Heart left ventricle (tissue), 16 donors: ENCODE measurements at regions of chr11 and their contacts with region 1.

Region 1: DNA sequence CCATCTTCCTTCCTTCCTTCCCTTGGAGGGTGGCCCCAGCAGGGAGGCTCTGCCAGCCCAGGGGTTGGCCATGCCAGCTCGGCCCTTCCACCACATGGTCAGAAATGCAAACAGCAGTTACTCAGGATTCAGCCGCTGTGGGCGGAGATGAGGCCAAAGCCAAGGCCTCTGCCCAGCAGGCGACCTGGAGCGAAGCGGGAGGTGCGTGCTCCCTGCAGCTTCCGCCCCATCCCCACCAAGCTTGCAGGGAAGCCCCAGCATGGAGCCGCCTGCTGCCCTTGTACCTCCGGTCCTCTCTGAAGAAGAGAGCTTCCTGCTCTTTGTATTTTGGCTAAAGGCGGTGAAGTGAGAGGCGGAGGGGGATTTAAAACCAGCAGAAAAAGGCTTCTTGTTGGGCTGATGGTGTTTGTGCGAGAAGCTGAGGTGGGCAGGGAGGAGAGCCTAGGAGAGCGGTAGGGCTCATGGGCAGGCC is 50.4 kb downstream of the ANO1 start:
- DNase-seq: no peak
- ATAC-seq: peak in 1 of 4 donors; percentile 29
- H3K4me3 ChIP-seq: no peak overlapping the region
- H3K27ac ChIP-seq: peak overlapping the region in 2 of 12 donors; percentile 9 to 13
- H3K4me1 ChIP-seq: peaks cover 0 to 1% (median 0%) of the 10 kb centered on the region in 12 donors
- H3K27me3 ChIP-seq: no peaks in the 10 kb centered on the region
- CTCF ChIP-seq: no peak
- POLR2A ChIP-seq: no peak

Region 2: GRCh38 chr11:70067591-70068341 is 60.7 kb before region 1 on chr11:
- intact Hi-C with region 1: loop called in 2 of 10 experiments (anchors 10 kb)
- DNase-seq: no peak
- ATAC-seq: no peak
- H3K4me3 ChIP-seq: no peak overlapping the region
- H3K27ac ChIP-seq: no peak overlapping the region
- H3K4me1 ChIP-seq: peaks cover 0 to 22% (median 9%) of the 10 kb centered on the region in 12 donors
- H3K27me3 ChIP-seq: peaks cover 0 to 41% (median 4%) of the 10 kb centered on the region in 9 donors
- CTCF ChIP-seq: no peak
- POLR2A ChIP-seq: no peak